Vagina (tissue), 2 donors: ENCODE measurements at regions of chr7 and their contacts with region 1.

Region 1: GRCh38 chr7:7103343-7104313 is 78.7 kb upstream of the C1GALT1 start:
- DNase-seq: no peak
- H3K4me3 ChIP-seq: no peak overlapping the region
- H3K27ac ChIP-seq: no peak overlapping the region
- H3K4me1 ChIP-seq: peaks cover 7% of the 10 kb centered on the region
- H3K27me3 ChIP-seq: no peaks in the 10 kb centered on the region
- CTCF ChIP-seq: peak; percentile 7 to 52 (median 50)
- POLR2A ChIP-seq: no peak

Region 2: GRCh38 chr7:7542251-7542835 is 438.7 kb after region 1 on chr7:
- intact Hi-C with region 1: loop called (anchors 5 kb)
- DNase-seq: no peak
- H3K4me3 ChIP-seq: no peak overlapping the region
- H3K27ac ChIP-seq: no peak overlapping the region
- H3K4me1 ChIP-seq: no peaks in the 10 kb centered on the region
- H3K27me3 ChIP-seq: no peaks in the 10 kb centered on the region
- CTCF ChIP-seq: no peak
- POLR2A ChIP-seq: no peak